Heart right ventricle (tissue), 16 donors: ENCODE measurements at regions of chr6 and their contacts with region 1.

Region 1: DNA sequence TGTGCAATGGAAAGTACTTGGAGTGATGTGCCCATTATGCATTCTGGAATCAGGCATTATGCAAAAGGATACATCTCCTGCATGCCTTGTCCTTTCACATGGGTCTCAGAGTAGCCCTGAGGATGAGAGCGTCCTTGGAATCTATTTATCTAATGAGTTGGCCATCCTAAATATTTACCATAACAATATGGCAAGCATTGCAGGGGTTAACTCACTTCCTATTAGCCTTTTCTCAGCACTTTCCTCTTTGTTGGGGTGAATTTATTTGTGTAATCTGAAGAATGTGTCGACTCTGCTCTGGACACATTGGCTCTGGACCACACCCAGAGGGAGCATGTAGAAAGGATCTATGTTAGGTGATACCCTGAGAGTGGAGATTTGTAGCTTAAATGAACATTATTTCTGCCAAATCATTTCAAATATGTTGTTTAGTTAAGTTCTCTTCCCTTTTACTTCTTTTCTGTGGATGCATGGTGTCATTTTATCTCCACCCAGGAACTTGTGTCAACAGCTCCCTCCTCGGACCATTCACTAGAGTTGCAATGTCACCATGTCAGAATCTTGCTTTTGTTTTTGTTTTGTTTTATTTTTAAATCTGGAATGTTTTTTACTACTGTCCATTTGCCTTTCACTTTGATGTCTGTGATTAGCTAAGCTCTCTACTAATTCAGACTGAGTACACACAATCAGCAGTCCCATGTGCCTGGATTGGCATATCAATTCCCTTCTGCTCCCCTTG is 757.0 kb upstream of the MMS22L start:
- DNase-seq: no peak
- ATAC-seq: no peak
- H3K4me3 ChIP-seq: no peak overlapping the region
- H3K27ac ChIP-seq: no peak overlapping the region
- H3K4me1 ChIP-seq: peaks cover 0 to 3% (median 0%) of the 10 kb centered on the region in 9 donors
- H3K27me3 ChIP-seq: peaks cover 0 to 39% (median 8%) of the 10 kb centered on the region in 7 donors
- CTCF ChIP-seq: peak in 6 of 9 donors; percentile 21 to 55 (median 46)

Region 2: DNA sequence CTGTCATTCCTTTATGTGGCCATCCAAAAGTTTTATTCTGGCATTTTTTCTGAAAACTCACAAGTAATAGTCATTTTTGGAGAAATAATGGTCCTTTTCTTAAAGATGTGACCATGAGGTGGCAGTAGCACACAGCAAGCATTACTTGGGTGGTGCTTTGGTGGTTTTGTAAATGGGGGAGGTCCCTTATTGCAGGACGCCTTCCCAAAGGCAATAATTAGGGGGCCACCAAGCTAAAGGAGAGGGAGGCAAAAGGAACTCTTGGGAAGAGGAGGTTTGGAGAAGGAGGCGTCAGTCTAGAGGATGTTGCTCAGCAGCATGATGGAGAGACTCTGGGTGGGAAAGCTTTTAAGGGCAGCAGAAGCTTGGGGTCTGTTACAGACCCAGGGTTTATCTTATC is 334.5 kb before region 1 on chr6:
- intact Hi-C with region 1: loop called in 1 of 10 experiments (anchors 10 kb)
- DNase-seq: no peak
- ATAC-seq: no peak
- H3K4me3 ChIP-seq: no peak overlapping the region
- H3K27ac ChIP-seq: no peak overlapping the region
- H3K4me1 ChIP-seq: no peaks in the 10 kb centered on the region
- H3K27me3 ChIP-seq: no peaks in the 10 kb centered on the region
- CTCF ChIP-seq: peak in 4 of 9 donors; percentile 21 to 38 (median 24)

Region 3: DNA sequence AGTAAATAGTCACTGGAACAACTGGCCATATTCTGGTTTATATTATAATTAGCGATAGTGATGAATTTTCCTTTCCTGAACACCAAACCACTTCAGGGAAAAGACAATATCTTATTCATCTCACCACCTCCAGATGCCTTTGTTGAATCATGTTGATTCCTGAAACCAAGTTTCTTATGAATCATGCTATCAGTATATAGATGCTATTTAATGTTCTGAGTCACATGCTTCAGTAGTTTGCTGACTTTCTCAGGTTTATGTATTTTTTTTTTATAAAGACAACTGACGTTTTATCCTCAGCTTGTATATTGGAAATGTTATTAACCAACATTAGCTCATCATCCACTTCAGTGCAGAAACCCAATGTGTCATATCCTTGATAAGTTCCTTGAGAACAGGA is 84.1 kb after region 1 on chr6:
- intact Hi-C with region 1: no loop called
- DNase-seq: no peak
- ATAC-seq: no peak
- H3K4me3 ChIP-seq: no peak overlapping the region
- H3K27ac ChIP-seq: no peak overlapping the region
- H3K4me1 ChIP-seq: no peaks in the 10 kb centered on the region
- H3K27me3 ChIP-seq: no peaks in the 10 kb centered on the region
- CTCF ChIP-seq: no peak